Activated CD4-positive, alpha-beta T cell treated with anti-CD3 and anti-CD28 coated beads for 36 hours (primary cell): ENCODE measurements at regions of chr15 and their contacts with region 1.

Region 1: DNA sequence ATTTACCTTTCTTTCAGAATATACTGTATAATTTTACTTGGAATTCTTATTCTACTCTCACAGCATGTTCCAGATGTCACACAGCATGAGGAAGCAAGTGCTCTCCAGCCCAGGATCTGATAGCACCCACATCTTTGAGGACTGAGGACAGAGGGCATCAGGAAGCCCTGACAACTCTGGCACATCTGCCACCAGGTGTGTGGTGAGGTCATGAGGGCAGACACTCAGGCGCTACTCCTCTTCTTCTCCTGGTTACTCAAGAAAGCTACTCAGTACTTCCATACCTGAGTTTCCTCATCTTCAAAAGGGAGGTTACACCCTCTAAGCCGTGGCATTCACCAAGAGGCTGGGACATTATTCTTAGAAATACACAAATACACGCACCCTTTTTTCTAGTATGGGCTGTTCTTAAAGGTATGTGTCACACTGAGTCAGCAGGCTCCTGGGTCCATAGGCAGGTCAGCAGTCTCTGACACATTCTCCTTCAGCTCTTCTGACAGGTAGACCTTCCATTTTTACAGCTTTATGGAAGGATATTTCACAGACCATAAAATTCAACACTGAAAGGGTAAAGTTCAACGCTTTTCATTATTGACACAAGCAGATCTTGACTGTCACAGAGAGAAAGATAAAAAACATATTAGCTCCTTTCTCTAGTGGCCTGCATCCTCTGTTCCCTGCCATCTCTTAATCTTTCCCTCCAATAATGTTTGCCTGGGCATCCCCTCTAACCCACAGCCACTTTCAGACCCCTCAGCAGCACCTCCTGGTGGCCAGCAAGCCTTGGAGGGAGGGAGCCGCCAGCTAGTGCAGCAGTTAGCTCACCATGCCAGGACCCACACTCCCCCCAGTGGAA is 103.2 kb upstream of the TJP1 start:
- DNase-seq: peak; percentile 70
- ATAC-seq: peak; percentile 44
- H3K4me3 Mint-ChIP-seq: no peak overlapping the region
- H3K27ac Mint-ChIP-seq: no peak overlapping the region
- H3K4me1 Mint-ChIP-seq: no peaks in the 10 kb centered on the region
- H3K27me3 Mint-ChIP-seq: peaks cover 39% of the 10 kb centered on the region

Region 2: DNA sequence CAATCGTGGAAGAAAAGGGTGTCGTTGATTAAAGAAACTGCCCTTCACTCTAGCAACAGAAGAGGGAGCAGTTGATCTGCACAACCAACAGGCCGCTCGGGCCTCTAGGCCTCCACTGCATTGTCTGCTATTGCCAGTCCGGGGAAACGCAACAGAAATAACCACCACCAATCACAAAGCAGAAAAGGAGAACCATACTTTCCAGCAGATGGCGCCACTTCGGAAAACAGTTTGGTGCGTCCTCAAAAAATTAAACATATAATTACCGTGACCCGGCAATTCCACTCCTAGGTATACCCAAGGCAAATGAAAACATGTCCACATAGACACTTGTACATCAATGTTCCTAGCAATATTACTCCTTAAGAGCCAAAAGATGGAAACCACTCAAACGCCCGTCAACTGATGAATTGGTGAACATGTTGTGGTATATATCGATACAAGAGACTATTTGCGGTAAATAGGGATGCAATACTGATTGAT is 257.3 kb before region 1 on chr15:
- CTCF ChIA-PET with region 1: no interaction called
- POLR2A ChIA-PET with region 1: no interaction called
- intact Hi-C with region 1: loop called in 1 of 2 experiments (anchors 1 kb)
- DNase-seq: peak; percentile 70
- ATAC-seq: peak; percentile 84
- H3K4me3 Mint-ChIP-seq: no peak overlapping the region
- H3K27ac Mint-ChIP-seq: no peak overlapping the region
- H3K4me1 Mint-ChIP-seq: no peaks in the 10 kb centered on the region
- H3K27me3 Mint-ChIP-seq: peaks cover 12% of the 10 kb centered on the region

Region 3: GRCh38 chr15:29747837-29748417 is 177.5 kb before region 1 on chr15:
- CTCF ChIA-PET with region 1: interaction called, 14 read pairs
- POLR2A ChIA-PET with region 1: no interaction called
- intact Hi-C with region 1: loop called in 1 of 2 experiments (anchors 5 kb)
- DNase-seq: no peak
- ATAC-seq: no peak
- H3K4me3 Mint-ChIP-seq: no peak overlapping the region
- H3K27ac Mint-ChIP-seq: no peak overlapping the region
- H3K4me1 Mint-ChIP-seq: no peaks in the 10 kb centered on the region
- H3K27me3 Mint-ChIP-seq: peaks cover 18% of the 10 kb centered on the region

Region 4: GRCh38 chr15:29815000-29815710 is 110.3 kb before region 1 on chr15:
- CTCF ChIA-PET with region 1: no interaction called
- POLR2A ChIA-PET with region 1: no interaction called
- intact Hi-C with region 1: loop called in 1 of 2 experiments (anchors 10 kb)
- DNase-seq: no peak
- ATAC-seq: no peak
- H3K4me3 Mint-ChIP-seq: no peak overlapping the region
- H3K27ac Mint-ChIP-seq: no peak overlapping the region
- H3K4me1 Mint-ChIP-seq: no peaks in the 10 kb centered on the region
- H3K27me3 Mint-ChIP-seq: peaks cover 74% of the 10 kb centered on the region